PC-9 (cell line): ENCODE measurements at regions of chr11 and their contacts with region 1.

Region 1: GRCh38 chr11:74570266-74571061 is 21.9 kb upstream of the POLD3 start:
- DNase-seq: peak; percentile 59 to 60
- H3K4me3 ChIP-seq: no peak overlapping the region
- H3K27ac ChIP-seq: no peak overlapping the region
- H3K4me1 ChIP-seq: no peaks in the 10 kb centered on the region
- H3K27me3 ChIP-seq: no peaks in the 10 kb centered on the region
- CTCF ChIP-seq: peak; percentile 95

Region 2: DNA sequence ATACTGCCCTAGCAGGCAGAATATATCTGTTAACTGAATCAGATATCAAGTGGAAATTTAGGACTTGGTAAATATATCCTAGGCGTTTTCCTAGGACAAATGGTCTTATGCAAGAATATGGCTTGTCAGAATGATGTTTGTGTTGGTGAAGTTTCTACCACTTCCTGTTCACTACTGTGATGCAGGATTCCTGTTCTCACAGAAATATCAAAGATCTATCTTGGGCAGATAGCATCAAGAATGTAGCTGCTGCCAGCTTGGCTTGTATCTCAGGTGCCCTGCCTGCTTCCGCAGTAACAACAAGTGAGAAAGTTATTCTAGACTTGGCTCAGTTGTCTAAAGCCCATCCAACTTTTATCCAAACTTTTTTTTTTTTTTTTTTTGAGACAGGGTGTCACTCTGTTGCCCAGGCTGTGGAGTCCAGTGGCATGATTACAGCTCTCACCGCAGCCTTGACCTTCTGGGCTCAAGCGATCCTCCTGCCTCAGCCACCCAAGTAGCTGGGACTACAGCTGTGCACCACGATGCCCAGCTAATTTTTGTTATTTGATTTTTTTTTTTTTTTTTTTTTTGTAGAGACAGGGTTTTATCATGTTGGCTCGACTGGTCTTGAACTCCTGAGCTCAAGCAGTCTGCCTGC is 338.0 kb before region 1 on chr11:
- CTCF ChIA-PET with region 1: no interaction called
- POLR2A ChIA-PET with region 1: interaction called, 25 read pairs
- intact Hi-C with region 1: no loop called
- DNase-seq: no peak
- H3K4me3 ChIP-seq: no peak overlapping the region
- H3K27ac ChIP-seq: no peak overlapping the region
- H3K4me1 ChIP-seq: no peaks in the 10 kb centered on the region
- H3K27me3 ChIP-seq: no peaks in the 10 kb centered on the region
- CTCF ChIP-seq: no peak

Region 3: DNA sequence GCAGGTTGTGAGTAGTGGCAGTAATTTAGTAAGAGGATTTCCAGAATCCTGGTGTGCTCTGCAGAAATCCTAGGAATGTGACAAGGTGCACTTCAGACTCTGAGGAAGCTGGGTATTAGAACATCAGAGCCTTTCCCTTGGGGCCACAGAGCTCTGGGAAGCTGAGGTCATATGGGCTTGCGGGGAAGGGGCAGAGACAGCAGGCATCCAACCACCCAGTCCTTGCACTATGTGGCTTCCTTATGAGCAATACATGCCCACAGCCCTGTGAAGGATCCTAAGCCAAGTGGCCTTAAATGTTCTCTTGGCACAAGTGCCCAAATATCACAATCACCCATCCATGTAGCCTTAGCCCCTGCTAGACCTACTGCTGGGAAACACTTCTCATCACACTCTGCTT is 305.2 kb before region 1 on chr11:
- CTCF ChIA-PET with region 1: interaction called, 16 read pairs
- POLR2A ChIA-PET with region 1: no interaction called
- intact Hi-C with region 1: no loop called
- DNase-seq: no peak
- H3K4me3 ChIP-seq: no peak overlapping the region
- H3K27ac ChIP-seq: no peak overlapping the region
- H3K4me1 ChIP-seq: peaks cover 14% of the 10 kb centered on the region
- H3K27me3 ChIP-seq: no peaks in the 10 kb centered on the region
- CTCF ChIP-seq: no peak

Region 4: GRCh38 chr11:74492974-74493790 is 77.3 kb before region 1 on chr11 and contains the start of gene LIPT2:
- CTCF ChIA-PET with region 1: interaction called, 5 read pairs
- POLR2A ChIA-PET with region 1: interaction called, 3 read pairs
- intact Hi-C with region 1: loop called (anchors 2 kb)
- DNase-seq: peak; percentile 96 to 99
- H3K4me3 ChIP-seq: peak within 1 kb of the TSS; percentile 70
- H3K27ac ChIP-seq: peak within 1 kb of the TSS; percentile 82
- H3K4me1 ChIP-seq: peaks cover 23% of the 10 kb centered on the region
- H3K27me3 ChIP-seq: no peaks in the 10 kb centered on the region
- CTCF ChIP-seq: no peak
- total RNA-seq, gene LIPT2: 5.8 and 6.8 TPM in 2 replicates

Region 5: DNA sequence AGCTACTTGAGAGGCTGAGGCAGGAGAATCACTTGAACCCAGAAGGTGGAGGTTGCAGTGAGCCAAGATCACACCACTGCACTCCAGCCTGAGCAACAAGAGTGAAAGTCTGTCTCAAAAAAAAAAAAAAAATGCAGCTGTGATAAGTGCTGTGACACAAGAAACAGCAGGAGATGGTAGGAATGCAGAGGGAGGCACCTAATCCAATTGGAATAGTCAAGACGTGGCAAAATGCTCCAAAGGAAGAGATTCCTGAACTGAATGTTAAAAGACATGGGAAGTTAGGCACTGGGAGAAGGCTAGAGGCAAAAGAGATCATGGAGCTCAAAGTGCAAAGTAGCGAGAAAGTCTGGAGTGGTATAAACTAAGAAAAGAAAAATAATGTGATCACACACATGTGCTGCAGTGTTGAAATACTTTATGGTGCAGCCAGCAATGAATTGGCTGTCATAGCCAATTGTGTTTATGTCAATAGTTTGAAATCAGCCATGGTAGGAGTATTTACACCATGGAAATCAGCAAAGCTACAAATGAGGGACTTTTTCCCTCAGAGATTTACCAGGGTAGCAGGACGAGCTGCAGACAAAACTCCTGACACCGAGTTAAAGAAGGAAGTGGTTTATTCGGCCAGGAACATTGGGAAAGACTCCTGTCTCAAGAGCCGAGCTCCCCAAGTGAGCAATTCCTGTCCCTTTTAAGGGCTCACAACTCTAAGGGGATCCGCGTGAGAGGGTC is 36.1 kb before region 1 on chr11:
- CTCF ChIA-PET with region 1: no interaction called
- POLR2A ChIA-PET with region 1: no interaction called
- intact Hi-C with region 1: no loop called
- DNase-seq: no peak
- H3K4me3 ChIP-seq: peak overlapping the region; percentile 33; the same call in 1 of the 2 replicates
- H3K27ac ChIP-seq: peak overlapping the region; percentile 67
- H3K4me1 ChIP-seq: peaks cover 70% of the 10 kb centered on the region
- H3K27me3 ChIP-seq: no peaks in the 10 kb centered on the region
- CTCF ChIP-seq: no peak